ENCODE measurements at regions of chr9 and their contacts with region 1.

Region 1: DNA sequence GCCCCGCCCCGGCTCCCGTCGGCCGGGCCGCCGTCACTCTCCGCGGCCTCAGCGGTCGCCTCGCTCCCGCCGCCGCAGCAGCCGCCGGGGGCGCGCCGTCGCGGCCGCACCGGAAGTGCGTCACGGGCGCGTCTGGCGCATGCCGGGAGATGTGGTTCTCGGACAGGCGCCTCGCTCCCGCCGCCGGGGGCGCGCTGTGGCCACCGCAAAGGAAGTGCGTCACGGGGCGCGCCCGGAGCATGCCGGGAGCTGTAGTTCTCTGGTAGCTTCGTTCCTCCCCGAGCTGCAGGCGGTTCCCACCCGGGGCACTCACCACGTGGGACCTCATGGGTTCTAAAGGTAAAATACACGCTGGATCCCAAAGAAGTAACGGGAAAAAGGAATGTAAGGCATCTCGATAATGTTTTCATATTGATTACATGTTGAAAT is at the start of gene UBAC1:
- DNase-seq: peak; percentile 97
- ATAC-seq: peak; percentile 90
- H3K4me3 ChIP-seq: peak within 1 kb of the TSS; percentile 38 to 88 (median 78)
- H3K4me3 Mint-ChIP-seq: peak within 1 kb of the TSS; percentile 88
- H3K27ac ChIP-seq: peak within 1 kb of the TSS; percentile 1 to 74
- H3K27ac Mint-ChIP-seq: peak within 1 kb of the TSS; percentile 83
- H3K4me1 ChIP-seq: peaks cover 11 to 18% of the 10 kb centered on the region in 2 donors
- H3K4me1 Mint-ChIP-seq: peaks cover 24% of the 10 kb centered on the region
- H3K27me3 ChIP-seq: peaks cover 0 to 22% (median 0%) of the 10 kb centered on the region in 4 experiments
- H3K27me3 Mint-ChIP-seq: peaks cover 18% of the 10 kb centered on the region
- CTCF ChIP-seq: no peak
- total RNA-seq, gene UBAC1: 30.8 and 32.4 TPM in 2 replicates

Region 2: DNA sequence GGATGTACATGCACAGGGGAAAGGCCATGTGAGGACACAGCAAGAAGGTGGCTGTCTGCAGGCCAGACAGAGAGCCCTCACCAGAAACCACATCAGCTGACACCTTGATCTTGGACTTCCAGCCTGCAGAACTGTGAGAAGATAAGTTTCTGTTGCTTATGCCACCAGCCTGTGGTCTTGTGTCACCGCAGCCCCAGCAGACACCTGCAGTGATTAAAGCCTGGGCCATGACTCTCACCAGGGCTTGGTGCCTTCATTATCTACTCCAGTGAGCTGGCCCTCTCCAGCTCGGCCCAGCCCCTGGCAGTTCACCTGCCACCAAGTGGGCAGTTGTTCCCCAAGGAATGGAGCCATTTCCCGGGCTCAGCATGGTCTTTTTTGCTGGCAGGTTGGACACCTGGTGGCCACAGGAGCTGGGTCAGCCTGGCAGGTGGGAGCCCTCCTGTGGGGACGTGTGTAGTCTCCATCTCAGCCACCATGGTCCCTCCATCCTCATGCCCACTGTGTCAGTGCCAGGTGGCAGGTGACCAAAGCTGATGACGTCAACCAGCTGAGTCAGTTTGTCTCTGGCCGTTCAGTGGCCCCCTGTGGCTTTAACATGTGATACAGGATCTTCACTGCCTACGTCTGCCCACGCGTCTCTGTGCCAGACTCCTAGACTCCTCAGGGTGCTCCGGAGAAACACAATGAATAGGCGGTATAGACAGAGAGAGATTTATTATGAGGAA is 581.6 kb before region 1 on chr9:
- CTCF ChIA-PET with region 1: no interaction called
- POLR2A ChIA-PET with region 1: no interaction called
- intact Hi-C with region 1: no loop called
- DNase-seq: no peak
- ATAC-seq: no peak
- H3K4me3 ChIP-seq: no peak overlapping the region
- H3K4me3 Mint-ChIP-seq: no peak overlapping the region
- H3K27ac ChIP-seq: no peak overlapping the region
- H3K27ac Mint-ChIP-seq: no peak overlapping the region
- H3K4me1 ChIP-seq: no peaks in the 10 kb centered on the region
- H3K4me1 Mint-ChIP-seq: no peaks in the 10 kb centered on the region
- H3K27me3 ChIP-seq: no peaks in the 10 kb centered on the region
- H3K27me3 Mint-ChIP-seq: no peaks in the 10 kb centered on the region
- CTCF ChIP-seq: no peak

Region 3: DNA sequence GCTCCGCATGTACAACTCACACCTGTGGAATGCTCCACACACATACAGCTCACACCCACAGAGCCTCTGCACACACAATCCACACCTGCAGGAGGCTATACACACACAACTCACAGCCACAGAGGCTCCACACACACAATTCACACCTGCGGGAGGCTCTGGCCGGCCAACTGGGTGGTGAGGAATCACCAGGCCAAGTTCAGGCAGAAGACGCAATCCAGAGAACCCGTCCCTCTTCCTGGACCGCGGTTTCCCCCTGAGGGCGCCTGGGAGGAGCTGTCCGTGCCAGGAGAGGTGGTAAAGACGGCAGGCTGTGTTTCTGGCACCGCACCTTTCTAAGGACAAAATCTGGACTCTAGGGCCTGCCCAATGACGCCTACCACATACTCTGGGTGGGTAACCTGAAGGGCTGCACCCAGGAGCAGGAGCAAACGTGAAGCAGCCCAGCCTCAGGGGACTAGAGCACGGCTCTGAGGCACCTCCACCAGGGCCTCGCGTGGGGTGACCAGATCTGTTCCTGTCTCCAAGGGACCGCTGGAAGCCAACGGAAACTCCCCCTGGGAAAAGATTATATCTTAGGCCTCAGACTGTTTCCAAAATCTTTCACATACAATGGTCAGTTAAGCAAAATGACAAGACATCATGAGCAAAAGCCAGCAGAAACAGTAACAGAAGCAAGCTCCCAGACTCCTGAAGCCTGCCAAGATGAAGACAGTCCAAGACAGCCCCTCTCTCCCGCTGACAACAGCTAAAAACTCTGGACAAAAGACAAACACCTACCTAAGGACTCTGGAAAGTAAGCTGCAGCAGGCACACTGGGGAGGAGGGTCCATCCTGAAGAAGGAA is 70.9 kb before region 1 on chr9:
- CTCF ChIA-PET with region 1: no interaction called
- POLR2A ChIA-PET with region 1: no interaction called
- intact Hi-C with region 1: no loop called
- DNase-seq: no peak
- ATAC-seq: no peak
- H3K4me3 ChIP-seq: no peak overlapping the region
- H3K4me3 Mint-ChIP-seq: no peak overlapping the region
- H3K27ac ChIP-seq: no peak overlapping the region
- H3K27ac Mint-ChIP-seq: no peak overlapping the region
- H3K4me1 ChIP-seq: peaks cover 18 to 24% of the 10 kb centered on the region in 2 donors
- H3K4me1 Mint-ChIP-seq: peaks cover 54% of the 10 kb centered on the region
- H3K27me3 ChIP-seq: no peaks in the 10 kb centered on the region
- H3K27me3 Mint-ChIP-seq: no peaks in the 10 kb centered on the region
- CTCF ChIP-seq: no peak

Region 4: DNA sequence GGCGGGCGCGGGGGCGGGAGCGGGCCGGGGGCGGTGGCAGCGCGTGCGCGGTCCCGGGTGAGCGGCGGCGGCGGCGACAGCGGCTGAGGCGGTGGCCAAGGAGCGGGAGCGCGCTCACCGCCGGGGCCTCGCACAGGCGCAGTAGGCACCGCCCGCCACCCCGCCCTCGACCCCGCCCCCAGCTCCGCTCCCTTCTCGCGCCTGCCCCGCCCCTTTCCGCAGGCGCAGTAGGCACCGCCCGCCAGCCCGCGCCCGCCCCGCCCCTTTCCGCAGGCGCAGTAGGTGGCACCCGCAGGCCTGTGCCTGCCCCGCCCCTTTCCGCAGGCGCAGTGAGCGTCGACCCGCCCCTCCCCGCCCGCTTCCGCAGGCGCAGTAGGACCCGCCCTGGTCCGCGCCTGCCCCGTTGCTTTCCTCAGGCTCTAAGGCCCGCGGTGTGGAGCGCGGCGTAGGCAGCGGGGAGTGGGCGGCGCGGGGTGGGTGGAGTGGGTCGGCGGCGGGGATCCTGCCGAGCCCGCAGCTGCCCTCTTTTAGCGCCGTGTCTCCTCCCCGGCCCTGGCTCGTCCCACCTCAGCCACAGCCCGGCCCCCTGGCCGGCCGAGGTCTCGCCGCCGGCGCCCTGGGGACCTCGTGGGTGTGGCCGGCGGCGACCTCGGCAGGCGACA is 53.7 kb before region 1 on chr9 and contains the start of gene CAMSAP1:
- CTCF ChIA-PET with region 1: no interaction called
- POLR2A ChIA-PET with region 1: no interaction called
- intact Hi-C with region 1: loop called (anchors 1 kb)
- DNase-seq: peak; percentile 97
- ATAC-seq: peak; percentile 88
- H3K4me3 ChIP-seq: peak within 1 kb of the TSS; percentile 38 to 85 (median 84)
- H3K4me3 Mint-ChIP-seq: peak within 1 kb of the TSS; percentile 93
- H3K27ac ChIP-seq: peak within 1 kb of the TSS; percentile 44 to 74
- H3K27ac Mint-ChIP-seq: peak within 1 kb of the TSS; percentile 80
- H3K4me1 ChIP-seq: peaks cover 20 to 23% of the 10 kb centered on the region in 2 donors
- H3K4me1 Mint-ChIP-seq: peaks cover 43% of the 10 kb centered on the region
- H3K27me3 ChIP-seq: no peaks in the 10 kb centered on the region
- H3K27me3 Mint-ChIP-seq: no peaks in the 10 kb centered on the region
- CTCF ChIP-seq: no peak
- total RNA-seq, gene CAMSAP1: 31.0 and 31.6 TPM in 2 replicates

Region 5: GRCh38 chr9:135949501-135950134 is 11.7 kb before region 1 on chr9:
- CTCF ChIA-PET with region 1: no interaction called
- POLR2A ChIA-PET with region 1: no interaction called
- intact Hi-C with region 1: no loop called
- DNase-seq: no peak
- ATAC-seq: no peak
- H3K4me3 ChIP-seq: no peak overlapping the region
- H3K4me3 Mint-ChIP-seq: no peak overlapping the region
- H3K27ac ChIP-seq: no peak overlapping the region
- H3K27ac Mint-ChIP-seq: no peak overlapping the region
- H3K4me1 ChIP-seq: no peaks in the 10 kb centered on the region
- H3K4me1 Mint-ChIP-seq: no peaks in the 10 kb centered on the region
- H3K27me3 ChIP-seq: no peaks in the 10 kb centered on the region
- H3K27me3 Mint-ChIP-seq: no peaks in the 10 kb centered on the region
- CTCF ChIP-seq: no peak

Region 6: GRCh38 chr9:136118320-136119060 is 157.2 kb after region 1 on chr9 and contains the start of gene TMEM250:
- CTCF ChIA-PET with region 1: interaction called, 124 read pairs
- POLR2A ChIA-PET with region 1: interaction called, 3 read pairs
- intact Hi-C with region 1: loop called (anchors 1 kb)
- DNase-seq: peak; percentile 99
- ATAC-seq: peak; percentile 87
- H3K4me3 ChIP-seq: peak within 1 kb of the TSS; percentile 32 to 76 (median 64)
- H3K4me3 Mint-ChIP-seq: peak within 1 kb of the TSS; percentile 87
- H3K27ac ChIP-seq: peak within 1 kb of the TSS; percentile 51 to 94
- H3K27ac Mint-ChIP-seq: peak within 1 kb of the TSS; percentile 94
- H3K4me1 ChIP-seq: peaks cover 15 to 29% of the 10 kb centered on the region in 2 donors
- H3K4me1 Mint-ChIP-seq: peaks cover 14% of the 10 kb centered on the region
- H3K27me3 ChIP-seq: no peaks in the 10 kb centered on the region
- H3K27me3 Mint-ChIP-seq: no peaks in the 10 kb centered on the region
- CTCF ChIP-seq: no peak
- total RNA-seq, gene TMEM250: 29.6 and 30.4 TPM in 2 replicates

Region 7: GRCh38 chr9:136255166-136255538 is 293.9 kb after region 1 on chr9:
- CTCF ChIA-PET with region 1: no interaction called
- POLR2A ChIA-PET with region 1: no interaction called
- intact Hi-C with region 1: no loop called
- DNase-seq: no peak
- ATAC-seq: no peak
- H3K4me3 ChIP-seq: no peak overlapping the region
- H3K4me3 Mint-ChIP-seq: no peak overlapping the region
- H3K27ac ChIP-seq: no peak overlapping the region
- H3K27ac Mint-ChIP-seq: no peak overlapping the region
- H3K4me1 ChIP-seq: no peaks in the 10 kb centered on the region
- H3K4me1 Mint-ChIP-seq: no peaks in the 10 kb centered on the region
- H3K27me3 ChIP-seq: peaks cover 0 to 5% (median 0%) of the 10 kb centered on the region in 4 experiments
- H3K27me3 Mint-ChIP-seq: no peaks in the 10 kb centered on the region
- CTCF ChIP-seq: no peak

Region 8: GRCh38 chr9:136267261-136268111 is 306.2 kb after region 1 on chr9:
- CTCF ChIA-PET with region 1: no interaction called
- POLR2A ChIA-PET with region 1: no interaction called
- intact Hi-C with region 1: loop called (anchors 1 kb)
- DNase-seq: peak; percentile 90
- ATAC-seq: peak; percentile 98
- H3K4me3 ChIP-seq: peak overlapping the region in 4 of 5 experiments; percentile 55 to 69 (median 62)
- H3K4me3 Mint-ChIP-seq: peak overlapping the region; percentile 85
- H3K27ac ChIP-seq: peak overlapping the region; percentile 50 to 66
- H3K27ac Mint-ChIP-seq: peak overlapping the region; percentile 84
- H3K4me1 ChIP-seq: peaks cover 7 to 16% of the 10 kb centered on the region in 2 donors
- H3K4me1 Mint-ChIP-seq: peaks cover 11% of the 10 kb centered on the region
- H3K27me3 ChIP-seq: no peaks in the 10 kb centered on the region
- H3K27me3 Mint-ChIP-seq: peaks cover 3% of the 10 kb centered on the region
- CTCF ChIP-seq: peak; percentile 38